CD14-positive monocyte (primary cell): ENCODE measurements at regions of chr13 and their contacts with region 1.

Region 1: GRCh38 chr13:29508130-29508875 is 87.2 kb downstream of the SLC7A1 start:
- DNase-seq: peak; percentile 50 to 66 (median 66)
- H3K4me3 ChIP-seq: no peak overlapping the region
- H3K4me3 Mint-ChIP-seq: no peak overlapping the region
- H3K27ac ChIP-seq: no peak overlapping the region
- H3K27ac Mint-ChIP-seq: no peak overlapping the region
- H3K4me1 ChIP-seq: peaks cover 0 to under 1% of the 10 kb centered on the region in 2 donors
- H3K4me1 Mint-ChIP-seq: peaks cover 2% of the 10 kb centered on the region
- H3K27me3 ChIP-seq: no peaks in the 10 kb centered on the region
- H3K27me3 Mint-ChIP-seq: peaks cover 0 to 11% (median 4%) of the 10 kb centered on the region in 3 donors
- CTCF ChIP-seq: peak; percentile 98

Region 2: GRCh38 chr13:29713839-29714238 is 205.5 kb after region 1 on chr13:
- intact Hi-C with region 1: loop called (anchors 2 to 5 kb)
- DNase-seq: peak in 2 of 3 donors; percentile 12 to 23
- H3K4me3 ChIP-seq: no peak overlapping the region
- H3K4me3 Mint-ChIP-seq: no peak overlapping the region
- H3K27ac ChIP-seq: no peak overlapping the region
- H3K27ac Mint-ChIP-seq: no peak overlapping the region
- H3K4me1 ChIP-seq: no peaks in the 10 kb centered on the region
- H3K4me1 Mint-ChIP-seq: no peaks in the 10 kb centered on the region
- H3K27me3 ChIP-seq: no peaks in the 10 kb centered on the region
- H3K27me3 Mint-ChIP-seq: peaks cover 4 to 14% (median 6%) of the 10 kb centered on the region in 3 donors
- CTCF ChIP-seq: peak; percentile 92